ENCODE measurements at regions of chr13 and their contacts with region 1.

Region 1: DNA sequence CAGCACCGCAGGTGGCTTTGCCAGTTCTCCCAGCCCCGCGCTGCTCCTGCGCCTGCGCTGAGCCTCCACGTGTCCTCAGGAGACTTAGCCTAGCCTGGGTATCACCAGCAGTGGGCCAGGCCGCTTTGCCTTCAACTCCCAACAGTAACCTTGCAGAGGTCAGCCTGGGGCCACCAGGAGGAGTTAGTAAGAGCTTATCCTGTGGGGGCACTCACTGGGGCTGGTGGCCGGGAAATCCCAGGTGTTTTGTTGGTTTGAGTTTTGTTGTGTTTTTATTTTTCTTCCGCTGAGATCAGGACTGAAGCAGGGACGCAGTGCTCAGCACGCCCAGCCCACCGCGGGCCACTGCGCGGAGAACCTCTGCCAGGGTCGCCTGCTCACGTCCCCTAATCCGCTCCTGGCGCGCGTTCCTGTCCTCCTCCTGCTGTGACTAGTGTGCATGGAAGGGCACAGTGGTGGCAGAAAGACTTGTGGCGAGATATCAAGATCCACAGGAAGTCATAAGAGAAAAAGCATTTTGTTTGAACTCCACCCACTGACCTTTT is 207.4 kb upstream of the RFC3 start:
- DNase-seq: peak; percentile 40
- H3K4me3 Mint-ChIP-seq: peak overlapping the region; percentile 70
- H3K27ac Mint-ChIP-seq: peak overlapping the region; percentile 95
- H3K4me1 Mint-ChIP-seq: peaks cover 50% of the 10 kb centered on the region
- H3K27me3 Mint-ChIP-seq: no peaks in the 10 kb centered on the region

Region 2: GRCh38 chr13:32917504-32917903 is 693.0 kb before region 1 on chr13:
- intact Hi-C with region 1: loop called (anchors 1 kb)
- DNase-seq: no peak
- H3K4me3 Mint-ChIP-seq: no peak overlapping the region
- H3K27ac Mint-ChIP-seq: peak overlapping the region; percentile 53
- H3K4me1 Mint-ChIP-seq: peaks cover 26% of the 10 kb centered on the region
- H3K27me3 Mint-ChIP-seq: no peaks in the 10 kb centered on the region

Region 3: GRCh38 chr13:33554919-33555791 is 55.4 kb before region 1 on chr13:
- intact Hi-C with region 1: loop called (anchors 1 kb)
- DNase-seq: no peak
- H3K4me3 Mint-ChIP-seq: no peak overlapping the region
- H3K27ac Mint-ChIP-seq: no peak overlapping the region
- H3K4me1 Mint-ChIP-seq: peaks cover 33% of the 10 kb centered on the region
- H3K27me3 Mint-ChIP-seq: no peaks in the 10 kb centered on the region

Region 4: DNA sequence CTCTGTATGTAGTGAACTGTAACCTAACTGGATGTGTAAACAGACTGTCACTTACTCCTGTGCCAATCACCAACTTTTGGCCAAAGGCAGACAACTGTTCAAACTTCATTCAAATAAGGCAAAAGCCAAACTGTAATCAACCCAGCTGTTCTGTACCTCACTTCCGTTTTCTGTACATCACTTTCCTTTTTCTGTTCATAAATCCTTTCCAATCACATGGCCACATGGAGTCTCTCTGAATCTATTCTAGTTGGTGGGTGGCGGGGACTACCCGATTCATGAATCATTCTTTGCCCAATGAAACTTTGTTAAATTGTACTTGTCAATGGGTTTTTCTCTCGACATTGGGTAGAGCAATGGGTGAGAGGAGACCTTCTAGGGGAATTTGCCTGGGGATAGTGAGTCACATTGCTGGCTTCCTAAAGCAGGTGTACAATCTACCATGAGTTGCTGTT is 29.1 kb after region 1 on chr13:
- intact Hi-C with region 1: loop called (anchors 1 kb)
- DNase-seq: no peak
- H3K4me3 Mint-ChIP-seq: no peak overlapping the region
- H3K27ac Mint-ChIP-seq: peak overlapping the region; percentile 80
- H3K4me1 Mint-ChIP-seq: peaks cover 48% of the 10 kb centered on the region
- H3K27me3 Mint-ChIP-seq: no peaks in the 10 kb centered on the region